Gastrocnemius medialis (tissue), 4 donors: ENCODE measurements at regions of chr6 and their contacts with region 1.

Region 1: GRCh38 chr6:109095027-109095834 is at the start of gene CEP57L1:
- DNase-seq: peak; percentile 96 to 97
- ATAC-seq: peak; percentile 75 to 81
- H3K4me3 ChIP-seq: peak within 1 kb of the TSS; percentile 67 to 90 (median 82)
- H3K27ac ChIP-seq: peak within 1 kb of the TSS; percentile 93 to 98 (median 96)
- H3K4me1 ChIP-seq: peaks cover 16 to 42% of the 10 kb centered on the region in 2 donors
- H3K27me3 ChIP-seq: no peaks in the 10 kb centered on the region
- CTCF ChIP-seq: peak in 1 of 5 experiments; percentile 27
- POLR2A ChIP-seq: no peak
- total RNA-seq, gene CEP57L1: 10.3 to 29.7 (median 17.5) TPM

Region 2: GRCh38 chr6:108074359-108075144 is 1020.7 kb before region 1 on chr6 and contains the start of gene OSTM1:
- in situ Hi-C with region 1: no loop called
- intact Hi-C with region 1: loop called (anchors 10 kb)
- DNase-seq: peak; percentile 73 to 85
- ATAC-seq: peak; percentile 97 to 98
- H3K4me3 ChIP-seq: peak within 1 kb of the TSS; percentile 90 to 99 (median 94)
- H3K27ac ChIP-seq: peak within 1 kb of the TSS; percentile 85 to 91 (median 88)
- H3K4me1 ChIP-seq: peaks cover 8 to 11% of the 10 kb centered on the region in 2 donors
- H3K27me3 ChIP-seq: no peaks in the 10 kb centered on the region
- CTCF ChIP-seq: peak in 2 of 5 experiments; percentile 8 to 22
- POLR2A ChIP-seq: peak; percentile 94 to 97
- total RNA-seq, gene OSTM1: 28.3 to 64.3 (median 40.0) TPM

Region 3: DNA sequence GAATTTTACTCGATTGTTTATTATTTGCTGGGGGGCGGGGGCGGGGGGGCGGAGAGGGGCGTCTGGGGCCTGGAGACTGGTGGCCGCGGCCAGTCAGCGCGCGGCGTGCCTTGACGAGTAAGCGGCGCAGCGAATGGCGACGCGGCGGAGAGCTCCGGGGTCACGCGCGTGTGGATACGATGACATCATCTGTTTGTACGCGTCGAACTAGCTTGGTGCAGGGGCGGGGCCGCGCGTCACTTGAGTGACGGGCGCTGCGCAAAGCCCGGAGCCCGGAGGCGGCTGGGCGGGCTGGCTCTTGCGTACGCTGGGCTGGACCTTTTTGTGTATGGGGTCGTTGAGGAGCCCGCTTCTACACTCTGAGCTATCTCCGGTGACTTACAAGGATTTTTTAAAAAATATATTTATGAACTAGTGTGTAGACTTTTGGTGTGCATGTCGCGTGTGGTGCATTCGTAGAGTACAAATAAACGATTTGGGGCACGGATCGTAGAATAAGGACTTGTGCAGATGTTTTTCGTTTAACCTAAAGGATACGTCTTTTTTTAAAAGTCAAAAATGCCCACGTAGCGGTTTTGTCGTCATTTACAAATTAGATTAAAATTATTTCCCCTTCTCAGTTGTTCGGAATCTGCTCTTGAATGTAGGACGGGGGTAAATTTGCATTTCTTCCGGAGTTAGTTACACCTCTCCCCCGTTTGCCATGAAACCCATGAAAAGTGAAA is 536.7 kb before region 1 on chr6:
- in situ Hi-C with region 1: no loop called
- intact Hi-C with region 1: loop called (anchors 2 kb)
- DNase-seq: peak; percentile 98 to 99
- ATAC-seq: peak; percentile 36 to 40
- H3K4me3 ChIP-seq: peak overlapping the region; percentile 81 to 99 (median 94)
- H3K27ac ChIP-seq: peak overlapping the region; percentile 95 to 100 (median 100)
- H3K4me1 ChIP-seq: peaks cover 29 to 30% of the 10 kb centered on the region in 2 donors
- H3K27me3 ChIP-seq: no peaks in the 10 kb centered on the region
- CTCF ChIP-seq: no peak
- POLR2A ChIP-seq: peak; percentile 66 to 94

Region 4: GRCh38 chr6:108667993-108668392 is 427.2 kb before region 1 on chr6:
- in situ Hi-C with region 1: loop called in 1 of 4 experiments (anchors 25 kb)
- intact Hi-C with region 1: loop called (anchors 5 kb)
- DNase-seq: peak; percentile 61 to 64
- ATAC-seq: peak; percentile 74 to 89
- H3K4me3 ChIP-seq: peak overlapping the region in 2 of 4 donors; percentile 2 to 22
- H3K27ac ChIP-seq: peak overlapping the region; percentile 49 to 72 (median 65)
- H3K4me1 ChIP-seq: peaks cover 82 to 85% of the 10 kb centered on the region in 2 donors
- H3K27me3 ChIP-seq: no peaks in the 10 kb centered on the region
- CTCF ChIP-seq: no peak
- POLR2A ChIP-seq: peak; percentile 20 to 54

Region 5: GRCh38 chr6:109164322-109164721 is 69.1 kb after region 1 on chr6:
- in situ Hi-C with region 1: no loop called
- intact Hi-C with region 1: no loop called
- DNase-seq: no peak
- ATAC-seq: no peak
- H3K4me3 ChIP-seq: no peak overlapping the region
- H3K27ac ChIP-seq: no peak overlapping the region
- H3K4me1 ChIP-seq: peaks cover 0 to 4% of the 10 kb centered on the region in 2 donors
- H3K27me3 ChIP-seq: no peaks in the 10 kb centered on the region
- CTCF ChIP-seq: no peak
- POLR2A ChIP-seq: no peak

Region 6: GRCh38 chr6:109174911-109175310 is 79.7 kb after region 1 on chr6:
- in situ Hi-C with region 1: no loop called
- intact Hi-C with region 1: loop called (anchors 5 kb)
- DNase-seq: no peak
- ATAC-seq: no peak
- H3K4me3 ChIP-seq: no peak overlapping the region
- H3K27ac ChIP-seq: no peak overlapping the region
- H3K4me1 ChIP-seq: peaks cover 13 to 24% of the 10 kb centered on the region in 2 donors
- H3K27me3 ChIP-seq: peaks cover 0 to 4% (median 0%) of the 10 kb centered on the region in 3 donors
- CTCF ChIP-seq: no peak
- POLR2A ChIP-seq: no peak

Region 7: DNA sequence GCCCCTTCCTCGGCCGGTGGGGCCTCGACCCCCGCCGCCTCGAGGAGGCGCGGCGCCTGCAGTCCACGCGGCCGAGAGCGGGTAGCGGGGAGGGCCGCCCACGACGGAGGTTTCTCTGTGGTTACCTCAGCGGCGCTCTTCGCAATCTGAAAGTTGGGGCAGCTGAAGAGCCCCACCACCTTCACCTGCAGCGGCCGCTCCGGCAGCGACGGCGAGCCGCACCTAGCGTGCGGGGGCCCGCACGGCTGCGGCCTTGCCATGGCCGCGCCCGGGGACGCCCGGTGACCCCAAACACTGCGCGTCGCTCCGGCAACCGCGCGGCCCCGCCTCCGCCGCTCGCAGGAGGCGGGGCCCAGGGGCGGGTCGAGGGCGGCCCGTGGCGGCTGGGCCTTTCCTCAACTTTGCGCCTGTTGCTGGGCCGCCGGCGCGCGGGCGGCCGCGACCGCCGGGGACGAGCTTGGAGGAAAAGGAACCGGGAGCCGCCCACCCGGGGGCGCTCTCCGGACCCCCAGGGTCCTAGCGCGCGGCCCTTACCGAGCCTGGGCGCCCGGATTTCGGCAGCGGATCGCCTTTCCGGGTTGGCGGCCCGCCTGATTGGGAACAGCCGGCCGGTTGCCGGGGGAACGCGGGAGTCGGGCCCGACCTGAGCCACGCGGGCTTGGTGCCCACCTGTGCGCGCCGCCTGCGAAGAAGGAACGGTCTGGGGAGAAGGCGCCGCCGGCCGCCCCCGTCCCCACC is 345.3 kb after region 1 on chr6 and contains the starts of genes PPIL6 and SMPD2:
- in situ Hi-C with region 1: no loop called
- intact Hi-C with region 1: loop called (anchors 5 kb)
- DNase-seq: peak; percentile 69 to 85
- ATAC-seq: peak; percentile 90 to 92
- H3K4me3 ChIP-seq: peak within 1 kb of the TSS; percentile 73 to 96 (median 87)
- H3K27ac ChIP-seq: peak within 1 kb of the TSS; percentile 74 to 89 (median 83)
- H3K4me1 ChIP-seq: peaks cover 10 to 15% of the 10 kb centered on the region in 2 donors
- H3K27me3 ChIP-seq: no peaks in the 10 kb centered on the region
- CTCF ChIP-seq: peak in 2 of 5 experiments; percentile 36 to 40
- POLR2A ChIP-seq: peak; percentile 36 to 62
- total RNA-seq, gene PPIL6: 0.64 to 2.9 (median 1.3) TPM
- total RNA-seq, gene SMPD2: 3.9 to 7.7 (median 5.9) TPM